ENCODE measurements at regions of chr3 and their contacts with region 1.

Region 1: GRCh38 chr3:44198284-44199269 is 43.1 kb upstream of the TOPAZ1 start:
- DNase-seq: peak; percentile 81
- CTCF ChIP-seq: peak; percentile 71

Region 2: GRCh38 chr3:43531835-43532234 is 666.7 kb before region 1 on chr3:
- in situ Hi-C with region 1: loop called (anchors 25 kb)
- DNase-seq: no peak
- CTCF ChIP-seq: no peak

Region 3: GRCh38 chr3:43879166-43879565 is 319.4 kb before region 1 on chr3:
- in situ Hi-C with region 1: loop called (anchors 10 kb)
- DNase-seq: peak; percentile 64
- CTCF ChIP-seq: peak; percentile 43